Dorsolateral prefrontal cortex (tissue), 120 donors: ENCODE measurements at regions of chr13 and their contacts with region 1.

Region 1: DNA sequence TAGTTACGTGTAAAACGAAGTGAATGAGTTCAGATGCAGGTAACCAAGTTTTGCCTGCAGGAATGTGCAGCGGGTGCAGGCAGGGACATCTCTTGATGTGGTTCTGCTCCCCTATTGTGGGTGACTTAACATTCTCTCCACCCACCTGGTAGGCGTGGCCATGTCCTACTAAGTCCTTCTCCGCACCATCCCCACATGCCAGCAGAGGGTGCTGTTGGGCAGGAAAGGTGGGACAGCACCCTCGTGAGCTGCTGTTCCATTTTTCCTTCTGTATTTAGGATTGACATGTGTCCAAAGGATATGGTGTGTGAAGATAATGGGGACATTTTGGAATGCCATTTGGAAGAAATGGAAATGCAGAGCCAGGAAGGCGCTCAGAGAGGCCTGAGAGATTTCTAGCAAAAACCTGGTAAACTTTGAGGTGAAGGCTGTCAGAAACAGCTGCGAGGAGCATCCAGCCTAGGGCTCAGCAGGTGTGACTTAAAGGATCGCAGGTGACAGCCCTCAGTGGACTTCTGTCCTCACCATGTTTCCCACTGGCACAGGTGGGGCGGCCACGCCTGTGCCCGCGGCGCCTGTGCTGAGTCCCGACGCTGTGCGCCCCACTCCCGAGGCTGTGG is 26.2 kb upstream of the MCF2L start:
- DNase-seq: peak; percentile 92 to 98 (median 96)
- H3K4me3 ChIP-seq: peak overlapping the region; percentile 43 to 76 (median 64)
- H3K27ac ChIP-seq: peak overlapping the region in 38 of 59 donors; percentile 5 to 84 (median 60)
- H3K27me3 ChIP-seq: peaks cover 0 to 4% (median 0%) of the 10 kb centered on the region in 45 donors
- CTCF ChIP-seq: peak; percentile 86 to 99 (median 97)

Region 2: DNA sequence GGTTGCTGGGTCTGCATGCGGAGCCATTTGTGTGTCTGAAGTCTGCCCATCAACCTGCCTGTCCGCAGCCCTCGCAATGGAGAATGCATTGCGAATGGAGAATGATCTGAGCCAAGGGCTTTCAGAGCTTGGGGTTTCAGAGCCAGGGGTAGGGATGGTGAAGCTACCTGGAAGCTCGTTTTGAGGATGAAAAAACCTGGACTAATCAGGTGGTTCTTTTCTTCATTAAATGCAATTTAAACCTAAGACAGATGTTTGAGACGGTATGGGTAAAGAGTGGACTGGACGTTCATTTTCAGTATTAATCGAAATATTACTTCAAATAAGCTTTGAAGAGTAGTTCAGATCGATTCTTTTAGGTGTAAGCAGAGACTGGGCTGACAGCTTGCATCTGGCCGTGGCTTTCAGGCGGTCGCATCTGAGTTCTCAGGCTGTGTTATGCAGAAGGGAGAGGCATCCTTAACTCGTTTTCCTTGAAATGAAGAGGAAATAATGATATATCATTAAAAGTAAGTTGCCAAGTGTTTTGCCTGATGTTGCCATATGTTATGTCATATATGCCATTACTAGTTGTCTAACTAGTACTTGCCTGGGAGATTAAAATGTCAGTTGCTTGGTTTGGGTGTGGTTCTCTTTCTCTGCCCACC is 27.0 kb after region 1 on chr13:
- intact Hi-C with region 1: loop called in 1 of 2 experiments (anchors 1 kb)
- DNase-seq: peak in 7 of 10 donors; percentile 3 to 45 (median 27)
- H3K4me3 ChIP-seq: peak overlapping the region; percentile 32 to 76 (median 61)
- H3K27ac ChIP-seq: peak overlapping the region in 53 of 59 donors; percentile 24 to 93 (median 76)
- H3K27me3 ChIP-seq: peaks cover 0 to 29% (median 0%) of the 10 kb centered on the region in 45 donors
- CTCF ChIP-seq: no peak

Region 3: DNA sequence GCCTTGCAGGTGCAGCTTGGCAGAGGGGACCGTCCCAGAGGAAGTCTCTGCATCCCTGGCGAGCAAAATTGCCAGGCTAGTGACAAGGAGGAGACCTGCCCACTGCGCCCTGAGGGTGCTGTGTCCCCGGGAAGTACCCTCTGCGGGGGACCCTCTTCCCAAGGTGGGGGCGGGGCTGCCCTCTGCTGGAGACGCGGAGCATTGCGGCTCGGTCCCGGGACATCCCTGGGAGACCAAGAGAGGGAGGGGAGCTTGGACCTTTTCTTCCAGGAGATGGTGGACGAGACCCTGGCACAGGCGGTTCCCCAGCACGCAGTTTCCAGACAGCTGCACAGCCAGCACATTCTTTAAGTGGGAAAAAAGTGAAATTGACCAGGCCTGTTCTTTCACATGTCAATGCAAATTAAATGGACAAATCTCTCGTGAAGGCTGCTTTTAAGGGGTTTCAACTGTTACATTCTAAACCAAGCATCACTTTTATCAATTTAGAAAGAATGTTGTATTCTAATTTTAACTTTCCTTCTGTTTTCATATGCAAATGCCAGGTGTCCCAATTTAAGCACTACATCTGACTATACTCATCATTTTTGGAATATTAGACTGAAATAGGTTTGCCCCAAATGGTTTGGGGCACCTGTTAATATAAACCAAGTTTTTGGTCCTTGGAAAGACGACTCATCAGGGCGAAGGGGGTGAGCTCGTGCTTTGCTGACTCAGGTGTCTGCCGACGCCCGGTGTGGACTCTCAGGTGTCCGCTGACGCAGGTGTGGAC is 86.9 kb after region 1 on chr13:
- intact Hi-C with region 1: loop called (anchors 2 to 5 kb)
- DNase-seq: peak in 6 of 10 donors; percentile 44 to 76 (median 60)
- H3K4me3 ChIP-seq: no peak overlapping the region
- H3K27ac ChIP-seq: peak overlapping the region in 4 of 59 donors; percentile 12 to 59 (median 29)
- H3K27me3 ChIP-seq: peaks cover 0 to 4% (median 0%) of the 10 kb centered on the region in 45 donors
- CTCF ChIP-seq: peak; percentile 50 to 95 (median 88)

Region 4: GRCh38 chr13:113153810-113154748 is 211.3 kb after region 1 on chr13:
- intact Hi-C with region 1: loop called in 1 of 2 experiments (anchors 5 kb)
- DNase-seq: peak; percentile 73 to 86 (median 82)
- H3K4me3 ChIP-seq: peak overlapping the region; percentile 24 to 74 (median 57)
- H3K27ac ChIP-seq: peak overlapping the region in 58 of 59 donors; percentile 6 to 90 (median 80)
- H3K27me3 ChIP-seq: no peaks in the 10 kb centered on the region
- CTCF ChIP-seq: peak in 7 of 56 donors; percentile 6 to 37 (median 13)

Region 5: GRCh38 chr13:113393563-113394338 is 451.0 kb after region 1 on chr13:
- intact Hi-C with region 1: loop called in 1 of 2 experiments (anchors 5 kb)
- DNase-seq: peak; percentile 51 to 87 (median 73)
- H3K4me3 ChIP-seq: peak overlapping the region; percentile 63 to 93 (median 79)
- H3K27ac ChIP-seq: peak overlapping the region in 35 of 59 donors; percentile 13 to 85 (median 58)
- H3K27me3 ChIP-seq: no peaks in the 10 kb centered on the region
- CTCF ChIP-seq: peak; percentile 32 to 98 (median 84)

Region 6: GRCh38 chr13:114174529-114174961 is 1231.7 kb after region 1 on chr13:
- intact Hi-C with region 1: no loop called
- DNase-seq: no peak
- H3K4me3 ChIP-seq: no peak overlapping the region
- H3K27ac ChIP-seq: no peak overlapping the region
- H3K27me3 ChIP-seq: peaks cover 0 to 7% (median 0%) of the 10 kb centered on the region in 45 donors
- CTCF ChIP-seq: no peak